ENCODE measurements at regions of chr1 and their contacts with region 1.

Region 1: GRCh38 chr1:64966158-64966971 is at the start of gene JAK1:
- DNase-seq: peak; percentile 90
- H3K4me3 Mint-ChIP-seq: peak within 1 kb of the TSS; percentile 81
- H3K27ac Mint-ChIP-seq: peak within 1 kb of the TSS; percentile 88
- H3K4me1 Mint-ChIP-seq: peaks cover 50% of the 10 kb centered on the region
- H3K27me3 Mint-ChIP-seq: peaks cover 3% of the 10 kb centered on the region
- total RNA-seq, gene JAK1: 204 to 205 TPM

Region 2: DNA sequence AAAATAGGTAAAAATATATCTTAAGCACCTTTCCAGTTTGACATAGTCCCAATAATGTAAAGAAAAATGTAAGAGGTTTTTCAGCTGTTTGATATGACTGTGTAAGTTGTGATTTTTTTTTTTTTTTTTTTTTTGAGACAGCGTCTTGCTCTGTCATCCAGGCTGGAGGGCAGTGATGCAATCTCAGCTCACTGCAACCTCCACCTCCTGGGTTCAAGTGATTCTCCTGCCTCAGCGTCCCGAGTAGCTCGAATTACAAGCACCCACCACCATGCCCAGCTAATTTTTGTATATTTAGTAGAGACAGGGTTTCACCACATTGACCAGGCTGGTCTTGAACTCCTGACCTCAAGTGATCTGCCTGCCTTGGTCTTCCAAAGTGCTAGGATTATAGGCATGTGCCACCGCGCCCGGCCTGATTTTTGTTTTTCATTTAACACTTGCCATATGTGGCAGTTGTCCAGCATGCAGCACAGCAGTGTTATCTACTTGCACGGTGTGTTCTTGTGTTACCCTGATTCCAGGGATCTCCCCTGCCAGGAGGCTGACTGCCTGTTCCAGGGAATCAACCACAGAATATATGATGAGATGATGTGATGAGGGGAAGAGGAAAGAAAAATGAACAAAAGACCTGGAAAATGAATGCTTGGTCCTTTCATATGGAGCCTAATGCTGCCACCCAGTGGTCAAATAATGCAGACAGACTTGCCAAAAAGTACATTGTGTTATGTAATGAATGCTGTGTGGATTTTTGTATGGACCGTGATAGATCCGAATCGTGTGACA is 142.5 kb before region 1 on chr1:
- CTCF ChIA-PET with region 1: interaction called, 4 read pairs
- POLR2A ChIA-PET with region 1: interaction called, 11 read pairs
- DNase-seq: peak; percentile 61
- H3K4me3 Mint-ChIP-seq: no peak overlapping the region
- H3K27ac Mint-ChIP-seq: no peak overlapping the region
- H3K4me1 Mint-ChIP-seq: peaks cover 29% of the 10 kb centered on the region
- H3K27me3 Mint-ChIP-seq: peaks cover 2% of the 10 kb centered on the region

Region 3: DNA sequence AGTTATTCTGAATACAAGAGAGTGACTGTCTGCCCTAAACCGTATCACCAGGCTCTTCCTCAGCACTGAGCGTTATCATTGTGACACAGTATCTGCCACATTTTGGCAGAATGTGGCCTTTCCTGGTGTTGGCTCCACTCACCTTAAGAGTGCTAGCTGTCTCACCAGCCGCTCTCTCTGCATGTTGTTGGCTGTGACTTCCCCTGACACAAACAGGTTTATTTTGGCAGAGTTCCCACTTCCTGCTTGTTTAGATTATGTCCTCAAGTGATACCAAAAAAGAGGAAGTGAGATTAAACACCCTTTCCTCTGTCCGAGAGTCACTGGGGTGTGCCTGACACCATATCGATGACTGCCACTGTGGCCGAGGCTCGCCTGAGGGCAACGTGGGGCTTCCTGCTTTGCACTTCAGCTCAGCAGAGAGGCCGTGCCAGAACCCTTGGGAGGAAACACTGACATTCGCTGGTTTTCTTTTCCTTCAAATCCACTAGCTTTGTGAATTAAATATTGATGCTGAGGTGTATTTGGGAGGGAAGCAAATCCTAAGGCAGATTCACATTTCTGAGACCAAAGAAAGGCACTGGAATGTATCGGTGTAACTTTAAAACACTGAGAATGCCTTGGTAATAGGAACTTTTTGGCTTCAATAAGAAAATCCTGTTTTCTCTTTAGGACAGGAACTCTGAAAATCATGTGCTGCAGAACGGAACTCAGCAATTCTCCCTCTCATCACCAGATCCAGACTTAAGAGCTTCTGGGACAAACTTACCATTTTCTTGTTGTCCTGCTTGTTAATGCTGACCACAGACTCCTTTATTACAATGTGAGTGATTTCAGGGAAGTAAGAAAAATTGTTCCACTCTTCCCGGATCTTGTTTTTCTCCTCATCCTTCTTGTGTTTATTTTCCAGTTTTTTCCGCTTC is 102.1 kb before region 1 on chr1:
- CTCF ChIA-PET with region 1: interaction called, 3 read pairs
- POLR2A ChIA-PET with region 1: interaction called, 13 read pairs
- DNase-seq: peak; percentile 70
- H3K4me3 Mint-ChIP-seq: no peak overlapping the region
- H3K27ac Mint-ChIP-seq: peak overlapping the region; percentile 85
- H3K4me1 Mint-ChIP-seq: peaks cover 37% of the 10 kb centered on the region
- H3K27me3 Mint-ChIP-seq: no peaks in the 10 kb centered on the region

Region 4: DNA sequence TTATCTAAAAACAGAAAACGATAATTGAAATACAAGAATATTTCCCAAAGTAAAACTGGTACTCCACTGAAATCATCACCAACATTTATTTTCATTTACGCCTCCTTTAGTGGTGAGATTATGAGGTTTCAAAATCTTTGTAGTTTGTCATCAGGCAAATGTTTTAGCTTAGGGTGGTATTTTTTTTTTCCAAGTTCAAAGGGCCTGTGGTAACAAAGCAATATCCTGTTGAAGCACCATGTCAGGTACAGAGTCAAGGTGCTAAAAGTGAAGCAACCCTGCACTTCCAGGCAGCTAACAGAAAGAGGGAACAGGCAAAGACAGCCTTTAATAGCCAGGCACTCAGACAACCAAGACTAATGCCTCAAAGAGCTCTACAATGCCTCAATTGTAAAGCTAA is 89.2 kb before region 1 on chr1:
- CTCF ChIA-PET with region 1: interaction called, 3 read pairs
- POLR2A ChIA-PET with region 1: interaction called, 11 read pairs
- DNase-seq: no peak
- H3K4me3 Mint-ChIP-seq: no peak overlapping the region
- H3K27ac Mint-ChIP-seq: peak overlapping the region; percentile 74
- H3K4me1 Mint-ChIP-seq: peaks cover 47% of the 10 kb centered on the region
- H3K27me3 Mint-ChIP-seq: no peaks in the 10 kb centered on the region

Region 5: DNA sequence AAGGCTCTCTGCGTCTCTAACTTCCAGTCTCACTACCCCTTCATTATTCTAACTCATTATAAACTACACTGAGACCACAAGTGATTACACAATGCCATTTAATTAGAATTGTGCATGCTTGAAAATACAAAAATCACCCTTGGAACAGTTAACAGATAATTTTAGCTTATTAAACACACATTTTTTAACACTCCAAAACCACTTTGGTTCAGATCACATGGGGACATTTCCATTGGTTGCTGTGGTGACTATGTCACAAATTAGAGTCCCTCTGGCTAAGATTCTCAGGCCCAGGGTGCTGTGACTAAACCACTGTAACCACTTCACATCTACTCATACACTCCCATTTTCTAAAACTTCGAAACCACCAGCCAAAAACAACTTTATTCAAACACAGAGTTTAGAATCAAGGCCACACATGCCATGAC is 43.1 kb before region 1 on chr1:
- CTCF ChIA-PET with region 1: no interaction called
- POLR2A ChIA-PET with region 1: interaction called, 14 read pairs
- DNase-seq: peak; percentile 30
- H3K4me3 Mint-ChIP-seq: no peak overlapping the region
- H3K27ac Mint-ChIP-seq: peak overlapping the region; percentile 28
- H3K4me1 Mint-ChIP-seq: peaks cover 69% of the 10 kb centered on the region
- H3K27me3 Mint-ChIP-seq: no peaks in the 10 kb centered on the region

Region 6: GRCh38 chr1:65002508-65003315 is 36.3 kb after region 1 on chr1:
- CTCF ChIA-PET with region 1: interaction called, 5 read pairs
- POLR2A ChIA-PET with region 1: interaction called, 37 read pairs
- DNase-seq: peak; percentile 73
- H3K4me3 Mint-ChIP-seq: peak overlapping the region; percentile 79
- H3K27ac Mint-ChIP-seq: no peak overlapping the region
- H3K4me1 Mint-ChIP-seq: peaks cover 26% of the 10 kb centered on the region
- H3K27me3 Mint-ChIP-seq: peaks cover 24% of the 10 kb centered on the region

Region 7: DNA sequence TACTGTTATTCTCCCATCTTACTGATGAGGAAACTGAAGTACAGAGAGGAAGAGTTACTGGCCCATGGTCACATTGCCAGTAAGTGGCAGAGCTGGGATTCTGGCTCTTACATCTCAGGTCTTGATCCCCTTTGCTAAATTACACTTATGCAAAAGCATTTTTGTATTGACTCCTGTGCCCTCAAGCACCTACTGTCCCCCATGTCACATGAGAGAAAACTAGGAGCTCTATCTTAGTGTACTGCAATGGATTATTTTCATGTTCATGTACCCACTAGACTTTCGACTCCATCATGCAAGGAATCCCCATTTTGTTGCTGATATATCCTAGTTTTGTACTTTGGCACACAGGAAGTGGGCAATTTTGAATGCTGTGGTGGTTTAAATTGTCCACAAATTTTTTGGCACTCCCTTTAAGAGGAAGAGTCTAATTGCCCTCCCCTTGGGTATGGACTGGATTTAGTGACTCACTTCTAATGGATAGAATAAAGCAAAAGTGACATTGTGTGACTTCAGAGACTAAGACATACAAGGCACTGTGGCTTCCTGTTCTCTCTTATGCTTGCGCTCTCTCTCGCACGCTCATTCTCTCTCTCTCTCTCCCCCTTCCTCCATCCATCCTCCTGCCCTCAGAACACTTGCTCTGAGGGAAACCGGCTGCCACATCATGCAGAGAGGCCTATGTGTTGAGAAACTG is 43.5 kb after region 1 on chr1:
- CTCF ChIA-PET with region 1: no interaction called
- POLR2A ChIA-PET with region 1: interaction called, 37 read pairs
- DNase-seq: peak; percentile 20
- H3K4me3 Mint-ChIP-seq: no peak overlapping the region
- H3K27ac Mint-ChIP-seq: peak overlapping the region; percentile 76
- H3K4me1 Mint-ChIP-seq: peaks cover 38% of the 10 kb centered on the region
- H3K27me3 Mint-ChIP-seq: peaks cover 4% of the 10 kb centered on the region

Region 8: GRCh38 chr1:65027666-65028358 is 61.4 kb after region 1 on chr1:
- CTCF ChIA-PET with region 1: no interaction called
- POLR2A ChIA-PET with region 1: no interaction called
- DNase-seq: no peak
- H3K4me3 Mint-ChIP-seq: no peak overlapping the region
- H3K27ac Mint-ChIP-seq: no peak overlapping the region
- H3K4me1 Mint-ChIP-seq: peaks cover 2% of the 10 kb centered on the region
- H3K27me3 Mint-ChIP-seq: no peaks in the 10 kb centered on the region

Region 9: DNA sequence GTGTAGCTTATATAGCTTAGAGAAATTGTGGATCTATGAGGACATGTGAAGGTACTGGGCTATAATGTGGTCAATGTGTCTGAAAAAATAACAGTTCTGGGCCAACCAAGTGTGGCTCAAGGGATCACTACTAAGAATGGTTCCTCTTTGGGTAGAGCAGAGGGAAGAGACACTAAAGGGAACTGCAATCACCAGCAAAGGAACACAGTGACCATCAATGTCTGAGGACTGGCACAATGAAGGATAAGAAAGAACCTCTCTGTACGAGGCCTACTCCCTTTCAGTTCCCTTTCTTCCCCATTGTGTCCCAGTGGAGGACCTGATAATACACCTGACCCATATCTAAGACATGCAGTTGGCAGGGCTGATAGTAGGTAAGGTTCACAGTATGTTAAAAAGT is 89.9 kb after region 1 on chr1:
- CTCF ChIA-PET with region 1: no interaction called
- POLR2A ChIA-PET with region 1: no interaction called
- DNase-seq: no peak
- H3K4me3 Mint-ChIP-seq: no peak overlapping the region
- H3K27ac Mint-ChIP-seq: no peak overlapping the region
- H3K4me1 Mint-ChIP-seq: peaks cover 8% of the 10 kb centered on the region
- H3K27me3 Mint-ChIP-seq: no peaks in the 10 kb centered on the region